ENCODE measurements at regions of chr20 and their contacts with region 1.

Region 1: GRCh38 chr20:34876162-34877001 is at the start of gene ACSS2:
- DNase-seq: peak; percentile 99
- ATAC-seq: peak; percentile 86
- H3K4me3 Mint-ChIP-seq: peak within 1 kb of the TSS; percentile 90
- H3K27ac Mint-ChIP-seq: peak within 1 kb of the TSS; percentile 85
- H3K4me1 Mint-ChIP-seq: peaks cover 54% of the 10 kb centered on the region
- H3K27me3 Mint-ChIP-seq: no peaks in the 10 kb centered on the region
- total RNA-seq, gene ACSS2: 29.9 to 35.1 TPM

Region 2: GRCh38 chr20:34516247-34517113 is 359.9 kb before region 1 on chr20 and contains the start of gene DYNLRB1:
- CTCF ChIA-PET with region 1: no interaction called
- POLR2A ChIA-PET with region 1: no interaction called
- intact Hi-C with region 1: loop called in 1 of 2 experiments (anchors 2 kb)
- DNase-seq: peak; percentile 98
- ATAC-seq: peak; percentile 81
- H3K4me3 Mint-ChIP-seq: peak within 1 kb of the TSS; percentile 97
- H3K27ac Mint-ChIP-seq: peak within 1 kb of the TSS; percentile 98
- H3K4me1 Mint-ChIP-seq: peaks cover 35% of the 10 kb centered on the region
- H3K27me3 Mint-ChIP-seq: no peaks in the 10 kb centered on the region
- total RNA-seq, gene DYNLRB1: 83.5 to 122 TPM

Region 3: DNA sequence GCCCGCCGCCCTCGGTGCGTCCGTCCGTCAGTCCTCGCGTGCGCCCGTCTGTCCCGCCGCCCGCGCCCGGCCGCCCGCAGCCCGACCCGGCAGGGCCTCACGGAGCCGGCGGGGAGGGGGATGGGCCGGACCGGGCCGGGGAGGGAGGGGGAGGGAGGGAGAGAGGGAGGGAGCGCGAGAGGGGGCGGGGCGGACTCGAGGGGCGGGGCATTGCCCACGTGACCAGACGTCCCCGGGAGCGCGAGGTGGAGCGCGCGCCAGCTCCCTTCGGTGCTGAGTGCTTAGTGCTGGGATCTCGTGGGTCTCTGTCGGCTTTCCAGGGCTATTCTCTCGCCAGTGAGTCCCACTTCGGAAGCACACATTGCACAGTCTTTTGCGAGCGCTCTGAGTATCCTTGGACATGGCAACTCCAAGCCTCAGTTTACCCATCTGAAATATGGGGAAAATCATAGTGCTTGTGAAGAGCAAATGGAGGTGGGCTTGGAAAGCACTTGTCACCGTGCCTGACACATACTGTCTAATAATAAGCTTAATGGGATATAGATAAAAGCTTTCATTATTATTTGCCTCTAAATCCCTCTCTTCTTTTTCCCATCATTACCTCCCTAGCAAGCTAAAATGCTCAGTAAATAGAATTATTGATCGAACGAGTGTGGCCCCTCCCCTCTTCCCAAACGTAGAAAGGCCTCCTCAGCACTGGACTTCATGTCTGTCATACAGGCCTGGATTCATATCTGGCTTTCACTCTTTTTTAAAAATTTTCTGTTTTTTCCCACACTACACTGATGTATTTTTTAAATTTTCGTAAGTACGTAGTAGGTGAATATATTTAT is 50.6 kb before region 1 on chr20 and contains the start of gene NCOA6:
- CTCF ChIA-PET with region 1: interaction called, 3 read pairs
- POLR2A ChIA-PET with region 1: no interaction called
- intact Hi-C with region 1: loop called (anchors 1 to 5 kb)
- DNase-seq: peak; percentile 95
- ATAC-seq: peak; percentile 67
- H3K4me3 Mint-ChIP-seq: peak within 1 kb of the TSS; percentile 86
- H3K27ac Mint-ChIP-seq: peak within 1 kb of the TSS; percentile 95
- H3K4me1 Mint-ChIP-seq: peaks cover 30% of the 10 kb centered on the region
- H3K27me3 Mint-ChIP-seq: no peaks in the 10 kb centered on the region
- total RNA-seq, gene NCOA6: 20.3 to 31.1 TPM

Region 4: GRCh38 chr20:34922654-34923424 is 46.5 kb after region 1 on chr20:
- CTCF ChIA-PET with region 1: interaction called, 3 read pairs
- POLR2A ChIA-PET with region 1: no interaction called
- intact Hi-C with region 1: loop called in 1 of 2 experiments (anchors 1 kb)
- DNase-seq: no peak
- ATAC-seq: no peak
- H3K4me3 Mint-ChIP-seq: no peak overlapping the region
- H3K27ac Mint-ChIP-seq: no peak overlapping the region
- H3K4me1 Mint-ChIP-seq: peaks cover 30% of the 10 kb centered on the region
- H3K27me3 Mint-ChIP-seq: no peaks in the 10 kb centered on the region

Region 5: GRCh38 chr20:35008411-35009342 is 132.3 kb after region 1 on chr20:
- CTCF ChIA-PET with region 1: no interaction called
- POLR2A ChIA-PET with region 1: no interaction called
- intact Hi-C with region 1: no loop called
- DNase-seq: no peak
- ATAC-seq: no peak
- H3K4me3 Mint-ChIP-seq: no peak overlapping the region
- H3K27ac Mint-ChIP-seq: no peak overlapping the region
- H3K4me1 Mint-ChIP-seq: no peaks in the 10 kb centered on the region
- H3K27me3 Mint-ChIP-seq: no peaks in the 10 kb centered on the region

Region 6: GRCh38 chr20:35039146-35039545 is 162.8 kb after region 1 on chr20:
- CTCF ChIA-PET with region 1: no interaction called
- POLR2A ChIA-PET with region 1: no interaction called
- intact Hi-C with region 1: no loop called
- DNase-seq: no peak
- ATAC-seq: no peak
- H3K4me3 Mint-ChIP-seq: no peak overlapping the region
- H3K27ac Mint-ChIP-seq: peak overlapping the region; percentile 35
- H3K4me1 Mint-ChIP-seq: peaks cover 6% of the 10 kb centered on the region
- H3K27me3 Mint-ChIP-seq: no peaks in the 10 kb centered on the region

Region 7: DNA sequence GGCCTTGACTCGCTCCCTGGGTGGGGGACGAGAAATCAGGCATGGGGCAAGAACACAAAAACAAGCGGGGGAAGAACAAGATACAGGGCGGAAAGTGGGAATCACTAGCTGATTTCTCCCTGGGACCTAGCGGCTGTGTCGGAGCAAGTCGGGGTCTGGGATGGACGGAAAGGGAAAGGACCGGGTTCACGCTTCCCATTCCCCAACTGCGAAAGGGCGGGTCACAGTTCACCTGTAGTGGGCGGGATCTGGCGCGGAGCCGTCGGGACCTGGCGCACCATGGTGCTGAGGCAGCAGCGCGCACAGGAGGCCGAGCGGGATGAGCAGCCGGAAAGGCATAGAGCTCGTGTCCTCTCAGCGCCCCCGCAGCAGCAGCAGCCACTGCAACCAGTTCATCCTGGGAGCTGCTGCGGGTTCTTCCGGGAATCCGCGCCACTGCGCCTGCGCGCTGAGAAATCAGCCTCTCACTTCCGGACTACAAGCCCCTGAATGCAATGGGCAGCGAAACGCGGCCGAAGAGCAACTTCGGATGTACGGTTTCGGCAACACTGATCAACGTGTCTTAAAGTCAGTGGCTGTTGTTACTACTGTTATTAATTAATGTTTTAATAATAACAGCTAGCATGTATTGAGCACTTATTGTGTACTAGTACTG is 270.7 kb after region 1 on chr20 and contains the start of gene EDEM2:
- CTCF ChIA-PET with region 1: interaction called, 6 read pairs
- POLR2A ChIA-PET with region 1: no interaction called
- intact Hi-C with region 1: loop called in 1 of 2 experiments (anchors 1 kb)
- DNase-seq: peak; percentile 97
- ATAC-seq: peak; percentile 92
- H3K4me3 Mint-ChIP-seq: peak within 1 kb of the TSS; percentile 97
- H3K27ac Mint-ChIP-seq: peak within 1 kb of the TSS; percentile 95
- H3K4me1 Mint-ChIP-seq: peaks cover 29% of the 10 kb centered on the region
- H3K27me3 Mint-ChIP-seq: no peaks in the 10 kb centered on the region
- total RNA-seq, gene EDEM2: 16.5 to 18.2 TPM

Region 8: GRCh38 chr20:35410613-35411012 is 534.2 kb after region 1 on chr20:
- CTCF ChIA-PET with region 1: no interaction called
- POLR2A ChIA-PET with region 1: no interaction called
- intact Hi-C with region 1: loop called in 1 of 2 experiments (anchors 10 kb)
- DNase-seq: no peak
- ATAC-seq: no peak
- H3K4me3 Mint-ChIP-seq: peak overlapping the region; percentile 91
- H3K27ac Mint-ChIP-seq: peak overlapping the region; percentile 100
- H3K4me1 Mint-ChIP-seq: peaks cover 21% of the 10 kb centered on the region
- H3K27me3 Mint-ChIP-seq: no peaks in the 10 kb centered on the region